ENCODE measurements at regions of chr11 and their contacts with region 1.

Region 1: GRCh38 chr11:73965076-73965860 is 14.4 kb downstream of the DNAJB13 start:
- DNase-seq: no peak
- ATAC-seq: peak; percentile 37; the same call in 1 of the 2 replicates
- H3K4me3 ChIP-seq: 0 out of 4 replicates have a peak overlapping the region, but pooled peaks of 1 of the 2 experiments have one; percentile 25
- H3K27ac ChIP-seq: no peak overlapping the region
- H3K4me1 ChIP-seq: peaks cover 9% of the 10 kb centered on the region
- H3K27me3 ChIP-seq: no peaks in the 10 kb centered on the region
- CTCF ChIP-seq: no peak

Region 2: DNA sequence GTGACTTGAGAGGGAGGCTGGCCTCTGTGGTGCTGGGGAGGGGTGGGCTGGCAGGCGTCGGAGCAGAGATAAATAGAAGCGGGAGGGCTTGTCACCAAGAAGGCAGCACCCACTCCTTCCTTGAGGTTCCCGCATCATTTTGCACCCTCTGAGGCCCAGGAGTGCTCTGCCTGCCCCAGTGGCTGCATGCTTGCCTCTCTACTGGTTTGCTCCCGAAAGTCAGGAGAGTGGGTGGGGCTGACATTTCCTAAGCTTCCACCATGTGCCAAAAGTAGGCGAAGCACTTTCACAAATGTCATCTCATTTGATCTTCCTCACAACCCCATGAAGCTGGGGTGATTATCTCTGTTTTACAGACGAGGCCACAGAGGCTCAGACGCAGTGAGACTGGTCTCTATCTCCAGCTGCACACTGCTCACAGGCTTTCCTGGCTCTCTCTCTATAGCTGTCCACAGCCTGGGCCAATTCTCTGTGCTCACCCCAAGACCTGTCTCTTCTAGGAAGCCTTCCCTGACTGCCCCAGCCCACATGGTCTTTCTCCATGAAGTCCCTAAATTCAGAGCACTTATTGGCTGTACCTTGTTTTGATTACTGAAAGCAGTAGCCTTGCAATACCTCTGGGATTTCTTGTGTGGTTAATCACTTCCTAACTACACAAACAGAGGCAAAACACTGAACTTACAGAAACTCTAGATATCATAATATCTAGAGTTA is 46.2 kb after region 1 on chr11:
- CTCF ChIA-PET with region 1: no interaction called
- POLR2A ChIA-PET with region 1: no interaction called
- in situ Hi-C with region 1: no loop called
- intact Hi-C with region 1: no loop called
- DNase-seq: no peak
- ATAC-seq: no peak
- H3K4me3 ChIP-seq: no peak overlapping the region
- H3K27ac ChIP-seq: no peak overlapping the region
- H3K4me1 ChIP-seq: no peaks in the 10 kb centered on the region
- H3K27me3 ChIP-seq: no peaks in the 10 kb centered on the region
- CTCF ChIP-seq: no peak

Region 3: GRCh38 chr11:74090701-74091100 is 125.4 kb after region 1 on chr11:
- CTCF ChIA-PET with region 1: no interaction called
- POLR2A ChIA-PET with region 1: no interaction called
- in situ Hi-C with region 1: no loop called
- intact Hi-C with region 1: loop called (anchors 10 kb)
- DNase-seq: no peak
- ATAC-seq: no peak
- H3K4me3 ChIP-seq: no peak overlapping the region
- H3K27ac ChIP-seq: no peak overlapping the region
- H3K4me1 ChIP-seq: no peaks in the 10 kb centered on the region
- H3K27me3 ChIP-seq: no peaks in the 10 kb centered on the region
- CTCF ChIP-seq: peak; percentile 49